Activated CD4-positive, alpha-beta T cell treated with anti-CD3 and anti-CD28 coated beads, Interleukin-2, amount 10 ng/mL, durations not matched to agents 24 days and 14 days (primary cell): ENCODE measurements at regions of chr10 and their contacts with region 1.

Region 1: DNA sequence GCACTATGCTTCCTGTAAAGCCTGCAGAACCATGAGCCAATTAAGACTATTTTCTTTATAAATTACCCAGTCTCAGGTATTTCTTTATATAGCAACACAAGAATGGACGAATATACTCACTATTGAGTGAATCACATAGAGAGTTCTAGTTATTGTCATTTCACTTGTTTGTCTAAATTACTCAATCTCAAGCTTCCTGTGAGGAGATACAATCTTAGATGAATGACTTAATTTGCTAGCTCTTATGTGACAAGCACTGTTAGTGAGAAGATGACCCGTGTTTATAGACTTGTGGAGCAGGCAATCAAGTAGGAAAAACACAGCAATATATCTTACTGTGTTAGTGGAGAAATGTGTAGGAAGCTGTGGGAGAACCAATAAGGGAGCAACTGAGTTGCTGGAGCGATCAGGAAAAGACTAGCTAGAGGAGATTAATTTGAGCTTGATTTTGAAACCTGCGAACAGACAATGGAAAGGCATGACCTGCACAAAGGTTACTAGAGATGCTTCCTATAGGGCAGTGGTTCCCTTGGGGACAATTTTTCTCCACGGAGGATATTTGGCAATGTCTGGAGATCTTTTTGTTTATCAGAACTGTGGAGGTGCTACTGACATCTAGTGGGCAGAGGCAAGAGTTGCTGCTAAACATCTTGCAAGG is 481.1 kb downstream of the SH2D4B start:
- DNase-seq: peak; percentile 63
- H3K4me3 Mint-ChIP-seq: no peak overlapping the region
- H3K27ac Mint-ChIP-seq: no peak overlapping the region
- H3K4me1 Mint-ChIP-seq: no peaks in the 10 kb centered on the region
- H3K27me3 Mint-ChIP-seq: no peaks in the 10 kb centered on the region

Region 2: DNA sequence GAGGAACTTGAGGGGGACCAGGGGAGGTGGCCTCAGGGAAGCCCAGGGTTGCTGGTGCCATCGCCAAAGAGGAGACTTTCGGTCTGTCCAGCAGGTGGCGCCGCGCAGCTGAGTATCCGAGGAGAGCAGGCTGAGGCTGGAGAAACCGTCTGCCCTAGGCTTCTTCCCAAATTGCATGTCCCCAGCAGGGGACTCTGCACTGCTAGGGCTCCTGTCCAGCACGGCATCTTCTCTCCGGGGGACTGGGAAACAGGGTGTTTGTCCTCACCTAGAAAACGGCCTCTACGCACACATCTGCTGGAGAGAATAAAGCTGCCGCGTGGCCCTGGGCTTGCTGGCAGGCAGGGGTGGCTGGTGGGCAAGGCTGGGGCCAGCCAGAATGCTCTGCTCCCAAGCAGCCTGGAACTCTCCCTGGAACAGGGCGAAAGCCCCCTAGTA is 319.2 kb before region 1 on chr10:
- intact Hi-C with region 1: loop called (anchors 2 kb)
- DNase-seq: peak; percentile 90
- H3K4me3 Mint-ChIP-seq: no peak overlapping the region
- H3K27ac Mint-ChIP-seq: no peak overlapping the region
- H3K4me1 Mint-ChIP-seq: no peaks in the 10 kb centered on the region
- H3K27me3 Mint-ChIP-seq: no peaks in the 10 kb centered on the region

Region 3: DNA sequence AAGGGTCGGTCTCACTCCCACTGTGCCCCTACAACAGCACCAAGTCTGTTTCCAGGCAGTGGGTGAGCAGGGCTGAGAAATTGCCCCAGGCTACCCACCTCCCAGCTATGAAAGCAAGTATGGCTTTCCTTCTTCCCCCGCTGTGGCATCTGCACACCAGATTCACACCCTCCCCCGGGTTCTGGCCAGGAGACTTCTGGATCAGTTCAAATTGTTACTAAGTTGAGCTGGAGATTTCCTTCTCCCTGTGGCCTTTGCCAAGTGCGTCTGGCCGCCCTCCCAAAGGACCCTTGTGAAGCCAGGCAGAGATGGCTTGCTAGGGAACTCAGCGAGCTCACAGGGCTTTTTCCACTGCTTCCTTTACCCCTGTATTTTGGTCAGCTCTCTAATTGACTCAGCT is 74.2 kb after region 1 on chr10:
- intact Hi-C with region 1: no loop called
- DNase-seq: no peak
- H3K4me3 Mint-ChIP-seq: no peak overlapping the region
- H3K27ac Mint-ChIP-seq: no peak overlapping the region
- H3K4me1 Mint-ChIP-seq: no peaks in the 10 kb centered on the region
- H3K27me3 Mint-ChIP-seq: no peaks in the 10 kb centered on the region